PC-3 (cell line): ENCODE measurements at regions of chr3 and their contacts with region 1.

Region 1: GRCh38 chr3:189148081-189148507 is 23.7 kb upstream of the TPRG1 start:
- DNase-seq: peak; percentile 82
- ATAC-seq: peak; percentile 80
- H3K4me3 ChIP-seq: no peak overlapping the region
- H3K27ac ChIP-seq: no peak overlapping the region
- H3K4me1 ChIP-seq: no peaks in the 10 kb centered on the region
- H3K27me3 ChIP-seq: no peaks in the 10 kb centered on the region
- CTCF ChIP-seq: peak; percentile 90

Region 2: DNA sequence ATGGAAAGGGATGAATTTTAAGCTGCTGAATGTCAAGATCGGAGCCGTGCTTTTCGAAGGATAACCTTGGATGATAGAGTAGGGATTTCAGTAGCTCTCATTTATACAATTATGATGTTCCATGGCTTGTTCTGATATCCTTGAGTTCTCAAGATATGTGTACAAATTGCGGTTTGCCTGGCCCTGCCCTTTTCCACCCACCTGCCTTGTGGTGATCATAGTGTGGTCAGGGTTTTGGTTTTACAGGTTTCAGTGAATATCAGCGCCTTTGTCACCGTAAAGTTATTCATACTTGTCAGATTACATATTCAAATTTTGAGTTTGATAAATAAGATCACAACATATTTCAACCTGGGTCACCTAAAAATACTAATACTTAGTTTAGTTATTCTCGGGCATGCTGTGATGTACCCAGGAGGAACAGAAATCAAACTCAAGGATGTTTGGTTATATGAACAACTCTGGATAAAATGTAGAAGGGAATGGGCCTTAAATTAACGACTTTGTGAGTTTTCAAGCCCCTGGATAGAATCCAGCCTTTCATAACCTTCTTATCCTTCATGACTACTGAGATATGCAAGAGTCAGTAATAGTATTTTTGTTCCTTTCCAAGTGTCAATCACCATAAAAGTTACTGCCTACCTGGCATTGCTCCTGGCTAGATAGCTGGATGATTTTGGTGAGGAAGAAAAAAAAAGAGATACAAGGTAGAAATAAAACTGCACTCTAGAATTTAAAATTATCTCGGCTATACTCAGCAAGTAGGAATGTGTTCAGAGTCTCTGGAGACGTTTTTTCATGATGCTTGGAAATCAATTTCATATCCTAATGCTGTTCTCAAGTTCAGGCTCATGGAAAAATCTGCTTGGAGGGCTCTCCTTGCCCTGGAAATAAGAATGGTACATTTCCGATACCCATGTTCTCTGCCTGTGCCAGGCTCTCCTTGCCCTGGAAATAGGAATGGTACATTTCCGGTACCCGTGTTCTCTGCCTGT is 185.5 kb before region 1 on chr3:
- CTCF ChIA-PET with region 1: no interaction called
- POLR2A ChIA-PET with region 1: no interaction called
- intact Hi-C with region 1: loop called (anchors 2 kb)
- DNase-seq: no peak
- ATAC-seq: no peak
- H3K4me3 ChIP-seq: no peak overlapping the region
- H3K27ac ChIP-seq: no peak overlapping the region
- H3K4me1 ChIP-seq: no peaks in the 10 kb centered on the region
- H3K27me3 ChIP-seq: no peaks in the 10 kb centered on the region
- CTCF ChIP-seq: no peak

Region 3: DNA sequence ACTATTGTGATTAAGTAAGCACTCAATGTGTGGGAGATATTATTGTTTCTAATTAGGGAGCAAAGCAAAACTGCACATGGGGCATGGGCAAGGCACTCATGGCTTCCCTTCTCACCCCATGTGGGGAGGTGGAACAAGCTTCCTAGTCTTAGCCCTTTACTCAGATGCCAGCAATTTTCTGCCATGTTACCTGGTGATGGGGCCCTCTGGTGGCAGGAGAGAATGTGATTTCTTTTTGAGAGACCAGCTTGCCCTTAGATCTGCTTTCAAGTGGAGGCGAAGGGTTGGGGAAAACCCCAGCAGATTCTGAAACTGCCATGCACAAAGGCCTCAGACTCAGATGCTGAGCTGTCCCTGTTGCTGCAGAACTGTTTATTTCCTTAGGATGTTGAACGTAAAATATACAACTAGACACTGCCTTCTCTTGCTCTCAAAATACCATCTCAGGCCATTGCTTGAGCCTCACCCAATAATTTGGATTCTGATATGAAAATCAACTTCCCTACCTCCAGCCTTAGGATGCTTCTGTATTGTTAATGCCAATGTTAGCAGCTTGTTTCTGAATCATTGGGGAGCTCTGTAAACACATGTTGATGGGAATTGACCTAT is 106.5 kb before region 1 on chr3:
- CTCF ChIA-PET with region 1: no interaction called
- POLR2A ChIA-PET with region 1: no interaction called
- intact Hi-C with region 1: loop called (anchors 5 kb)
- DNase-seq: peak; percentile 75
- ATAC-seq: peak; percentile 84
- H3K4me3 ChIP-seq: no peak overlapping the region
- H3K27ac ChIP-seq: no peak overlapping the region
- H3K4me1 ChIP-seq: no peaks in the 10 kb centered on the region
- H3K27me3 ChIP-seq: no peaks in the 10 kb centered on the region
- CTCF ChIP-seq: peak; percentile 86

Region 4: DNA sequence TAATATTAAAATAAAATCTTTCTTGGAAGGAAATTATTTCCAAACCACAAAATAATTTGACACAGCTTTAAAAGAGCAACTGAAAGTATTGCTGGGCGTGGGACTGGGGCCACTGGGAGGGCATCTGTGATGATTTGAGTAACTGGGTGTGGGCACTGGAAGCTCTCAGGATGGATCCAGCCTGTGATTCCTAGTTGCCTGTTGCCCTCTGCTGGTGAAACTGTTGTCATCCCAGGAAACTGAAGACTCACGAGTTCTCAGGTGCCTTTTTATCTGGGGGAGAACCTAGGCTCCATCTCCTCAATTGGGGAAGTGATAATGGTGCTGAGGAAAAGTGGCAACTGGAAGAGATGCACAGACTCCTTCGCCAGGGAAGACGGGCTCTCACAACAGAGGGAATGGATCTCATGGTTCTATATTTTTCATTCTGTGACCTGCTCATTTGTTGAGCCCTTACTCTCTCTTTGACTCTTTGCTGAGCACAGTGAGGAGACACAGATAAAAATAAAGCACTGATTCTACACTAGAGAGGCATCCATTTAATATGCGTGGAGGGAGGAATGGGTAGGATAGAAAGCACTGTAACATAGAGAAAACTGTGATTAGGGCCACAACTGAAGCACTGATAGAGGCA is 85.2 kb after region 1 on chr3:
- CTCF ChIA-PET with region 1: no interaction called
- POLR2A ChIA-PET with region 1: no interaction called
- intact Hi-C with region 1: loop called (anchors 1 kb)
- DNase-seq: peak; percentile 84
- ATAC-seq: peak; percentile 98
- H3K4me3 ChIP-seq: no peak overlapping the region
- H3K27ac ChIP-seq: no peak overlapping the region
- H3K4me1 ChIP-seq: no peaks in the 10 kb centered on the region
- H3K27me3 ChIP-seq: no peaks in the 10 kb centered on the region
- CTCF ChIP-seq: peak; percentile 88